ENCODE measurements at regions of chr11 and their contacts with region 1.

Region 1: DNA sequence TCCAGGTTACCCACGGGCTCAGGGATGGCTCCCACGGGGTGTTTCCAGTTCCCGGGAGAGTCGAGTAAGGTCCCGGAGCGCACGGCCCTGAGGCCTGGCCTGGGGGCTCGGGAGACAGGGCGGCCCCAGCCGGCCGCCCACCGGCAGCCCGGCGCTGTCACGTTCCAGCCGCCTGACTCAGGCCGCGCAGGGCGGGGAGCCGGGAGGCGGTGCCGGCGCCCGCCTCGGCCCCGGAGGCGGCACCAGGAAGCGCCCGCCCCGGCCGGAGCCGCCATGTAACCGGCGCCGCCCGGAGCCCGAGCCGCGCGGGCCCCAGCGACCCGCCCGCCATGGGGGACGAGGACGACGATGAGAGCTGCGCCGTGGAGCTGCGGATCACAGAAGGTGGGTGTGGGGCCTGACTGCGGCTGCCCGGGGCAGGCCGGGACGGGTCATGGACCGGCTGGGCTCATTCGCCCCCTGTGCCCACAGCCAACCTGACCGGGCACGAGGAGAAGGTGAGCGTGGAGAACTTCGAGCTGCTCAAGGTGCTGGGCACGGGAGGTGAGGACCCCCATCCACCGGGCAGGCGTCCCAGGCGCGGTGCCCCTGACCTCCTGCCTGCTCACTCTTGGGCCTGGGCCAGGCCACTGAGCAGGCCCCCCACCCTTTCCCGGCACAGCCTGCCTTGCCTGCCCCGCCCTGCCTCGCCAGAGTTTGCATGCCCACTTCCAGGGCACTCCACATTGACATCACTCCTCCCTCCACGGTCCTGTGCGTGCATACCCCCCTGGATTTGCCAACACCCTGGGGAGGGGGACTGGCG is at the start of gene RPS6KA4:
- DNase-seq: peak; percentile 80 to 92 (median 90)
- ATAC-seq: peak; percentile 85
- H3K4me3 ChIP-seq: peak within 1 kb of the TSS; percentile 81
- H3K27ac ChIP-seq: peak within 1 kb of the TSS; percentile 91
- H3K4me1 ChIP-seq: peaks cover 34 to 62% of the 10 kb centered on the region in 2 experiments
- H3K27me3 ChIP-seq: no peaks in the 10 kb centered on the region
- CTCF ChIP-seq: no peak
- EP300 ChIP-seq: no peak
- POLR2A ChIP-seq: peak; percentile 71
- RAD21 ChIP-seq: no peak
- polyA plus RNA-seq, gene RPS6KA4: 0.15 to 0.27 TPM

Region 2: DNA sequence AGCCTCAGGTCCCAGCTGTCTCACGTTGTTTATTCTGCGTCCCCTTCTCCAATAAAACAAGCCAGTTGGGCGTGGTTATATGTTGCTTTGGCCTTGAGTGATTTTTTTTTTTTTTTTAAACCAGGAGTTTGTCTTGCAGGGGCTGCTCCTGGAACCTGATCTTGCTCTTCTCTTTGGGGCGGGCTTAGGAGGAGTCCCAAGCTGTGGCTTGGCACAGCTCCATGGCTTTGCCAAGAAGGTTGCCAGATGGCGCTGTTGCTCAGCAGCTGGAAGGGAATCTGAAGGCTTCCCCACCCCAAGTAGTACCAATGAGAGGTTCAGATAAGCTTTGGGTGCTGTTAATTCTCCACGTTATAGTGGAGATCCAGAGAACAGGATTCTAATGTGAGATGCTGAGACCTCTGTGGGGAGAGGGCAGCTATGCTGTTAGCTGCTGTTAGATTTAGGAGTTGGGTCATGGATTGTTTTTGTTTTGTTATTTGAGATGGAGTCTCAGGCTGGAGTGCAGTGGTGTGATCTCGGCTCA is 154.6 kb before region 1 on chr11:
- CTCF ChIA-PET with region 1: no interaction called
- POLR2A ChIA-PET with region 1: interaction called, 4 read pairs
- in situ Hi-C with region 1: no loop called
- intact Hi-C with region 1: loop called (anchors 5 kb)
- DNase-seq: peak; percentile 79 to 96 (median 86)
- ATAC-seq: peak; percentile 63
- H3K4me3 ChIP-seq: no peak overlapping the region
- H3K27ac ChIP-seq: peak overlapping the region; percentile 29; the same call in 2 of the 3 replicates
- H3K4me1 ChIP-seq: peaks cover 36 to 60% of the 10 kb centered on the region in 2 experiments
- H3K27me3 ChIP-seq: no peaks in the 10 kb centered on the region
- CTCF ChIP-seq: peak; percentile 86 to 97 (median 95)
- EP300 ChIP-seq: peak; percentile 50; the same call in 1 of the 2 replicates
- POLR2A ChIP-seq: peak; percentile 56; the same call in 1 of the 2 replicates
- RAD21 ChIP-seq: peak; percentile 87 to 90

Region 3: GRCh38 chr11:64331557-64332371 is 27.3 kb before region 1 on chr11:
- CTCF ChIA-PET with region 1: no interaction called
- POLR2A ChIA-PET with region 1: interaction called, 4 read pairs
- in situ Hi-C with region 1: no loop called
- intact Hi-C with region 1: loop called (anchors 1 kb)
- DNase-seq: peak; percentile 72 to 91 (median 74)
- ATAC-seq: peak; percentile 77
- H3K4me3 ChIP-seq: no peak overlapping the region
- H3K27ac ChIP-seq: peak overlapping the region; percentile 79
- H3K4me1 ChIP-seq: peaks cover 32 to 48% of the 10 kb centered on the region in 2 experiments
- H3K27me3 ChIP-seq: no peaks in the 10 kb centered on the region
- CTCF ChIP-seq: peak; percentile 75 to 79 (median 78)
- EP300 ChIP-seq: peak; percentile 32; the same call in 1 of the 2 replicates
- POLR2A ChIP-seq: 0 out of 2 replicates have a peak, but pooled peaks have one; percentile 53
- RAD21 ChIP-seq: peak; percentile 51 to 71

Region 4: DNA sequence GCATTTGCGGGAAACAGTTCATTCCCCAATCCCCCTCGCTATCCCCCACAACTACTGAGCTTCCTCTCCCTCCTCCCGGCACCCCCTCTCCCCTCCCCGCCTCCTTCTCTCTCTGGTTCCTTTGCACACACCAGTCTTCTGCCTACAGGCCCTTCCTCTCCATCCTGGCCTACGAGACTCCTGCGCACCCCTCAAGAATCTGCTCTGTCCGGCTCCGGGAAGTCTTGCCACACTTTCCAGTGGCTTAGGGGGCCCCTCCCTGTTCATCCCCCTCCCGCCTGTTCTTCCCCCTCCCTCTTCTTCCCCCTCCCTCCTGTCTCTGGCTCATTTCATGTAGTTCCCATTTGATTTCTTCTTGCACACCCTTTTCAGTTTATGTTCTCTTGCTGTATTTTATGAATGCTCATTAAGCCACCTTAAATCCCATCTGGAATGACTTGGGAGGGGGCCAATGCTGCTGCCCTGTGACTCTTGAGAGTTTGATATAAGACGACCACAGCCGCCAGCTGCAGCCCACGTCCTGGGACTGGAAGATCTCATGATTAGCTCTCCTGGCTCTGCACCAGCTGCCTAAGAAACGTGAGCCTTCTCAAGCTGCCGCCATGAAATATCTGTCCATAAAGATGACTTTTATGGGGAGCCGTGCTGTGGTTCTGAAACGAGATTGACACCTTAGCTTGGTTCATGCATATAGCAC is 50.7 kb after region 1 on chr11:
- CTCF ChIA-PET with region 1: no interaction called
- POLR2A ChIA-PET with region 1: no interaction called
- in situ Hi-C with region 1: no loop called
- intact Hi-C with region 1: loop called (anchors 5 kb)
- DNase-seq: no peak
- ATAC-seq: no peak
- H3K4me3 ChIP-seq: no peak overlapping the region
- H3K27ac ChIP-seq: no peak overlapping the region
- H3K4me1 ChIP-seq: no peaks in the 10 kb centered on the region; a peak in 1 of 5 replicates
- H3K27me3 ChIP-seq: peaks cover 9 to 26% of the 10 kb centered on the region in 2 experiments; a peak in 4 of 5 replicates
- CTCF ChIP-seq: no peak
- EP300 ChIP-seq: no peak
- POLR2A ChIP-seq: no peak
- RAD21 ChIP-seq: no peak

Region 5: GRCh38 chr11:64472593-64473455 is 113.7 kb after region 1 on chr11:
- CTCF ChIA-PET with region 1: no interaction called
- POLR2A ChIA-PET with region 1: no interaction called
- in situ Hi-C with region 1: no loop called
- intact Hi-C with region 1: loop called (anchors 5 kb)
- DNase-seq: peak; percentile 28 to 78 (median 53)
- ATAC-seq: peak; percentile 94
- H3K4me3 ChIP-seq: no peak overlapping the region
- H3K27ac ChIP-seq: peak overlapping the region; percentile 75
- H3K4me1 ChIP-seq: peaks cover 10 to 11% of the 10 kb centered on the region in 2 experiments; a peak in 4 of 5 replicates
- H3K27me3 ChIP-seq: peaks cover 3 to 30% of the 10 kb centered on the region in 2 experiments; a peak in 2 of 5 replicates
- CTCF ChIP-seq: no peak
- EP300 ChIP-seq: peak; percentile 75
- POLR2A ChIP-seq: no peak
- RAD21 ChIP-seq: no peak

Region 6: GRCh38 chr11:64652586-64653387 is 293.7 kb after region 1 on chr11:
- CTCF ChIA-PET with region 1: interaction called, 4 read pairs
- POLR2A ChIA-PET with region 1: interaction called, 3 read pairs
- in situ Hi-C with region 1: loop called (anchors 5 kb)
- intact Hi-C with region 1: loop called (anchors 5 kb)
- DNase-seq: peak; percentile 84 to 88 (median 86)
- ATAC-seq: peak; percentile 89
- H3K4me3 ChIP-seq: no peak overlapping the region
- H3K27ac ChIP-seq: no peak overlapping the region
- H3K4me1 ChIP-seq: peaks cover 23 to 27% of the 10 kb centered on the region in 2 experiments
- H3K27me3 ChIP-seq: peaks cover 0 to 18% of the 10 kb centered on the region in 2 experiments; a peak in 3 of 5 replicates
- CTCF ChIP-seq: peak; percentile 91 to 97 (median 94)
- EP300 ChIP-seq: no peak
- POLR2A ChIP-seq: no peak; the same call in 1 of the 2 replicates
- RAD21 ChIP-seq: peak; percentile 79 to 90